ENCODE measurements at regions of chr11 and their contacts with region 1.

Region 1: GRCh38 chr11:6705905-6706535 is 22.9 kb upstream of the MRPL17 start:
- DNase-seq: peak in 8 of 9 donors; percentile 20 to 49 (median 38)
- ATAC-seq: peak; percentile 79
- H3K4me3 ChIP-seq: no peak overlapping the region
- H3K4me3 Mint-ChIP-seq: no peak overlapping the region
- H3K27ac ChIP-seq: peak overlapping the region; percentile 28
- H3K27ac Mint-ChIP-seq: peak overlapping the region in 8 of 9 donors; percentile 36 to 87 (median 76)
- H3K4me1 ChIP-seq: no peaks in the 10 kb centered on the region
- H3K4me1 Mint-ChIP-seq: peaks cover 11 to 39% (median 17%) of the 10 kb centered on the region in 7 donors
- H3K27me3 ChIP-seq: no peaks in the 10 kb centered on the region
- H3K27me3 Mint-ChIP-seq: no peaks in the 10 kb centered on the region

Region 2: GRCh38 chr11:6531267-6531752 is 174.7 kb before region 1 on chr11:
- CTCF ChIA-PET with region 1: interaction called, 15 read pairs
- POLR2A ChIA-PET with region 1: interaction called, 4 read pairs
- intact Hi-C with region 1: loop called (anchors 1 kb)
- DNase-seq: peak in 7 of 9 donors; percentile 7 to 51 (median 39)
- ATAC-seq: peak; percentile 83
- H3K4me3 ChIP-seq: no peak overlapping the region
- H3K4me3 Mint-ChIP-seq: no peak overlapping the region
- H3K27ac ChIP-seq: no peak overlapping the region
- H3K27ac Mint-ChIP-seq: no peak overlapping the region
- H3K4me1 ChIP-seq: peaks cover 4 to 5% of the 10 kb centered on the region in 2 donors
- H3K4me1 Mint-ChIP-seq: peaks cover 5 to 14% (median 11%) of the 10 kb centered on the region in 7 donors
- H3K27me3 ChIP-seq: no peaks in the 10 kb centered on the region
- H3K27me3 Mint-ChIP-seq: no peaks in the 10 kb centered on the region

Region 3: GRCh38 chr11:6603287-6604080 is 102.5 kb before region 1 on chr11 and contains the starts of genes ILK and RRP8:
- CTCF ChIA-PET with region 1: interaction called, 13 read pairs
- POLR2A ChIA-PET with region 1: no interaction called
- intact Hi-C with region 1: loop called in 1 of 2 experiments (anchors 1 kb)
- DNase-seq: peak; percentile 69 to 86 (median 78)
- ATAC-seq: peak; percentile 92
- H3K4me3 ChIP-seq: peak within 1 kb of the TSS; percentile 85
- H3K4me3 Mint-ChIP-seq: no peak within 1 kb of the TSS
- H3K27ac ChIP-seq: peak within 1 kb of the TSS; percentile 86
- H3K27ac Mint-ChIP-seq: no peak within 1 kb of the TSS
- H3K4me1 ChIP-seq: peaks cover 51% of the 10 kb centered on the region in 2 donors
- H3K4me1 Mint-ChIP-seq: peaks cover 9 to 33% (median 21%) of the 10 kb centered on the region in 7 donors
- H3K27me3 ChIP-seq: no peaks in the 10 kb centered on the region
- H3K27me3 Mint-ChIP-seq: no peaks in the 10 kb centered on the region
- total RNA-seq, gene ILK: 34.4 to 165 (median 89.6) TPM
- total RNA-seq, gene RRP8: 21.4 to 37.9 (median 27.9) TPM

Region 4: DNA sequence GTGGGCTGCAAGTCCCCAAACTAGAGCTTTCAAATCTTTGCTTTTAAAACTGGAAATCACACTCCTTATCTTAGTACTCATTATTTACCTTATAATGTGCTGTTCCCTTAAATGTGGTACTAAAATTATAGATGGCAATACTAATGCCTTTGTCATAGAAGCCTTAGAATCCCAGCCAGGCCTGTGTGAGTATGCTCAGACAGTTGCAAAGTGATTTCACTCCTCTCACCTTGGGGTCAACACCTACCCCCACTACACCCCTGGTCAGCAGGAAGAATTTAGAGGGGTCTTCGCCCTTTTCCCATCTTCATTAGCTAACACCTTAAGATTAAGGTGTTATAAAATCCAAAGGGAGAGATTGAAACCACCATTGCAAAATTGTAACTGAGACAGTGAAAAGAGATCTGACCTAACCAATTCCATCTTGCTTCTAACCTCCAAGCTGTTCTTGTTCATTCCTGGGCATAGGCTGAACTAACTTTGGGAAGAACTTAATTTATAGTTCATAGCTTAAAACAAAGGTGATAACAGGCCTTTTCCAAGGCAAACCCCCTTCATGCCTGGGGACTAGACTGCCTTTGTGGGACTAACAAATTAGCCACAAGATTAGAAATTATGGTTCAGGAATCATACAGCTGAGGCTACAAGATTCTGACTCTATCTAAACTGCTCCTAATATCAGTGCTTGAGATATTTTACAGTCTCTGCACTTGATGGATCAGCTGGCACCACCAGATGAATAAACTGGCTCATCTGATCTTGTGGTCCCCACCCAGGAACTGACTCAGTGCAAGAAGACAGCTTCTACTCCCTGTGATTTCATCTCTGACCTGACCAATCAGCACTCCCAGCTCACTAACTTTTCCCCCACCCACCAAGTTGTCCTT is 12.4 kb before region 1 on chr11:
- CTCF ChIA-PET with region 1: interaction called, 10 read pairs
- POLR2A ChIA-PET with region 1: no interaction called
- intact Hi-C with region 1: no loop called
- DNase-seq: peak in 5 of 9 donors; percentile 19 to 52 (median 33)
- ATAC-seq: peak; percentile 47
- H3K4me3 ChIP-seq: no peak overlapping the region
- H3K4me3 Mint-ChIP-seq: peak overlapping the region in 2 of 10 donors; percentile 22 to 52
- H3K27ac ChIP-seq: no peak overlapping the region
- H3K27ac Mint-ChIP-seq: peak overlapping the region; percentile 6 to 86 (median 65)
- H3K4me1 ChIP-seq: peaks cover 0 to 9% of the 10 kb centered on the region in 2 donors
- H3K4me1 Mint-ChIP-seq: peaks cover 11 to 34% (median 20%) of the 10 kb centered on the region in 7 donors
- H3K27me3 ChIP-seq: no peaks in the 10 kb centered on the region
- H3K27me3 Mint-ChIP-seq: no peaks in the 10 kb centered on the region

Region 5: DNA sequence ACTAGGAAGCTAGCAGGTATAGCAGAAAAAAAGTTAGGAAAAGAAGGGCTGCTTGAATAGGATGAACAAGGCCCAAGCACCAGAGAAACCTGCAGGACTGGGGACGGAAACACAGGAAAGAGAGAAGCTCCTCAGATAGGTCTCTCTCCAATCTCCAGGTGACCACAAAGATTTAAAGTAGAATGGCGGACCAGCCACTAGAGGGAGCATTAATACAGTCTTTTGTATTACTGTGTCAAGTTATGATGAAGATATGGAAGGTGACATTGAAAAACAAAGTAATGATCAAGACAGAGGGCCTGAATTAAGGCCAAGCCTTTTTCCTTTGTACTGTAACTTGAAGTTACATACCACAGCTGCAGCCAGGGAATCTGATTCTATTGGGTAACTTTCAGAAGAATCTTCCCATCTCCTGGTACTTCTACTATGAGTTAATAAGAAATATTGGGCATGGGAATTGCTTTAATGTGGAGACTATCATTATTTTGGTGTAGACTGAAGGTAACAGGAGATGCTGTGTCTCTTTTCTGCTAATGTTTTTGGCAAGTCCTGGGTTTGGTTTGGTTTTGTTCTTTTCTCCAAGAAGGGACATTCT is 31.9 kb after region 1 on chr11:
- CTCF ChIA-PET with region 1: interaction called, 31 read pairs
- POLR2A ChIA-PET with region 1: interaction called, 3 read pairs
- intact Hi-C with region 1: loop called in 1 of 2 experiments (anchors 2 kb)
- DNase-seq: peak in 8 of 9 donors; percentile 46 to 79 (median 72)
- ATAC-seq: peak; percentile 86
- H3K4me3 ChIP-seq: no peak overlapping the region
- H3K4me3 Mint-ChIP-seq: peak overlapping the region in 9 of 10 donors; percentile 4 to 90 (median 46)
- H3K27ac ChIP-seq: peak overlapping the region; percentile 61
- H3K27ac Mint-ChIP-seq: peak overlapping the region in 8 of 9 donors; percentile 34 to 92 (median 83)
- H3K4me1 ChIP-seq: peaks cover 70 to 73% of the 10 kb centered on the region in 2 donors
- H3K4me1 Mint-ChIP-seq: peaks cover 65 to 96% (median 86%) of the 10 kb centered on the region in 7 donors
- H3K27me3 ChIP-seq: no peaks in the 10 kb centered on the region
- H3K27me3 Mint-ChIP-seq: no peaks in the 10 kb centered on the region

Measured in naive thymus-derived CD4-positive, alpha-beta T cell (primary cell).